GM10248 (cell line): ENCODE measurements at regions of chr3 and their contacts with region 1.

Region 1: GRCh38 chr3:143604402-143605185 is 243.7 kb downstream of the SLC9A9 start:
- DNase-seq: no peak
- CTCF ChIP-seq: no peak

Region 2: GRCh38 chr3:143619231-143619630 is 14.6 kb after region 1 on chr3:
- CTCF ChIA-PET with region 1: interaction called, 10 read pairs
- POLR2A ChIA-PET with region 1: no interaction called
- DNase-seq: no peak
- CTCF ChIP-seq: no peak

Region 3: DNA sequence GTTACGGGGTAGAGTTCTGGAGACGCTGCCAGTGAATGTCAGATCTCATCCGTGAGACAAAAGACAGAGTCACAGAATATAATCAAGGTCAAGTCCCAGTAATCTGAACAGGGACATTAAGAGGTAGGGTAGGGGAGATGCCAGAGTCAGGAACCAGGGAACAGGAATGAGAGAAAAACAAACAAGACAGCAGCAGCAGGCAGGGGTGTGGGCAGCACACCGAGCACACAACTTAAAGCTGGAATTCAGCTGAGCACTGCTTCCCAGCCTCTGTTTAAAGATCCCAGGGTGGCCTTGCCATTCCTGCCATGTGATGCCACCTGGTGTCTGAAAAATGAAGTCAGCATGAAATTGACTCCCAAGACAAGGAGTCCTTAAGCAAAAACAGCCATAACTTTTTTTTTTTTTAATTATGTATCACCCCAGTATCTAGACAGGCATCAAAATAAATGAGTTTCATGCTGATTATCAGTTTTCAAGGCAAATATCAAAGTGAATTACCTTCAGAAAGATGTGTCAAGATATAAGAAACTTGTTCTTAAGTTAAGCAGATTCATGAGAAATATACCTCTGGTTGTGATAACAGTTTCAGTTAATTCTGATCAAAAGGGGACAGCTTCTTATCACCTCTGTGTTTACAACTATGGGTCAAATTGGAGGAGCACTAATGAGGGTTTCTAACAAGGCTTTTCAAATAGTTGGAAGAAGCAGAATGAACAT is 39.9 kb after region 1 on chr3:
- CTCF ChIA-PET with region 1: interaction called, 16 read pairs
- POLR2A ChIA-PET with region 1: no interaction called
- DNase-seq: peak; percentile 42
- CTCF ChIP-seq: peak; percentile 39